HepG2 (cell line): ENCODE measurements at regions of chr3 and their contacts with region 1.

Region 1: GRCh38 chr3:48151058-48151806 is 37.0 kb downstream of the CDC25A start:
- DNase-seq: peak; percentile 78
- ATAC-seq: peak; percentile 97
- H3K4me3 ChIP-seq: peak overlapping the region in 2 of 3 experiments; percentile 41 to 59; a peak in 5 of 6 replicates
- H3K27ac ChIP-seq: no peak overlapping the region
- H3K4me1 ChIP-seq: peaks cover 22% of the 10 kb centered on the region
- H3K27me3 ChIP-seq: no peaks in the 10 kb centered on the region
- CTCF ChIP-seq: peak; percentile 98
- EP300 ChIP-seq: no peak
- POLR2A ChIP-seq: no peak
- RAD21 ChIP-seq: peak; percentile 96

Region 2: GRCh38 chr3:47849699-47850563 is 301.3 kb before region 1 on chr3:
- CTCF ChIA-PET with region 1: no interaction called
- POLR2A ChIA-PET with region 1: no interaction called
- in situ Hi-C with region 1: loop called (anchors 10 kb)
- intact Hi-C with region 1: no loop called
- DNase-seq: peak; percentile 50
- ATAC-seq: peak; percentile 74
- H3K4me3 ChIP-seq: no peak overlapping the region
- H3K27ac ChIP-seq: no peak overlapping the region
- H3K4me1 ChIP-seq: no peaks in the 10 kb centered on the region
- H3K27me3 ChIP-seq: no peaks in the 10 kb centered on the region
- CTCF ChIP-seq: peak; percentile 44
- EP300 ChIP-seq: no peak
- POLR2A ChIP-seq: no peak; a peak in 2 of 4 replicates
- RAD21 ChIP-seq: no peak

Region 3: GRCh38 chr3:47989981-47990440 is 161.2 kb before region 1 on chr3:
- CTCF ChIA-PET with region 1: interaction called, 11 read pairs
- POLR2A ChIA-PET with region 1: interaction called, 3 read pairs
- in situ Hi-C with region 1: loop called (anchors 10 kb)
- intact Hi-C with region 1: loop called (anchors 1 kb)
- DNase-seq: peak; percentile 76
- ATAC-seq: peak; percentile 93
- H3K4me3 ChIP-seq: no peak overlapping the region
- H3K27ac ChIP-seq: no peak overlapping the region
- H3K4me1 ChIP-seq: no peaks in the 10 kb centered on the region
- H3K27me3 ChIP-seq: no peaks in the 10 kb centered on the region
- CTCF ChIP-seq: peak; percentile 91
- EP300 ChIP-seq: no peak
- POLR2A ChIP-seq: no peak
- RAD21 ChIP-seq: peak; percentile 90

Region 4: GRCh38 chr3:48047841-48048456 is 103.3 kb before region 1 on chr3:
- CTCF ChIA-PET with region 1: no interaction called
- POLR2A ChIA-PET with region 1: no interaction called
- in situ Hi-C with region 1: no loop called
- intact Hi-C with region 1: loop called (anchors 2 kb)
- DNase-seq: peak; percentile 44
- ATAC-seq: peak; percentile 55
- H3K4me3 ChIP-seq: no peak overlapping the region
- H3K27ac ChIP-seq: peak overlapping the region; percentile 31
- H3K4me1 ChIP-seq: peaks cover 20% of the 10 kb centered on the region
- H3K27me3 ChIP-seq: no peaks in the 10 kb centered on the region
- CTCF ChIP-seq: no peak
- EP300 ChIP-seq: no peak
- POLR2A ChIP-seq: no peak
- RAD21 ChIP-seq: no peak

Region 5: DNA sequence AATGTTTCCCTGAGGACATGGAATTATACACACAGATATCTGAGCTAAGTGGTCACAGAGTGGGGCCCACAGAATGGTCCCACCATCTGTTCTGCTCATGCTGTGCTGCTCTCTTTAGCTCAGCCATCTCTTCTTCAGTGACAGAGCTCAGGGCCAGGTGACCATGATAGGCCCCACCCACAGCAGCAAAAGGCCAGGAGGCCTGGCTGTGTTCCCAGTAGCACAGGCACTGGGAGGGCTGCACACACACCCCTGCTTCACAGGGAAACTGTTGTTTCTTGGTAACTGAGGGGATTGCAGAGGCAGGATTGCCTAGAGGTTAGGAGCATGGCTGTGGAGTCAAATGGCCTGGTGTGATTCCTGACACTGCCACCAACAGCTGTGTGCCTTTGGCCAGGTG is 216.0 kb after region 1 on chr3:
- CTCF ChIA-PET with region 1: no interaction called
- POLR2A ChIA-PET with region 1: no interaction called
- in situ Hi-C with region 1: no loop called
- intact Hi-C with region 1: no loop called
- DNase-seq: no peak
- ATAC-seq: peak; percentile 45; the same call in 2 of the 3 replicates
- H3K4me3 ChIP-seq: no peak overlapping the region
- H3K27ac ChIP-seq: no peak overlapping the region
- H3K4me1 ChIP-seq: no peaks in the 10 kb centered on the region
- H3K27me3 ChIP-seq: peaks cover 1 to 22% of the 10 kb centered on the region in 2 experiments; a peak in 2 of 5 replicates
- CTCF ChIP-seq: no peak
- EP300 ChIP-seq: no peak
- POLR2A ChIP-seq: no peak
- RAD21 ChIP-seq: no peak